Heart left ventricle (tissue), 16 donors: ENCODE measurements at regions of chr22 and their contacts with region 1.

Region 1: GRCh38 chr22:44448271-44448830 is 49.7 kb downstream of the RTL6 start:
- DNase-seq: peak; percentile 59 to 90 (median 78)
- ATAC-seq: peak; percentile 72 to 98 (median 86)
- H3K4me3 ChIP-seq: no peak overlapping the region
- H3K27ac ChIP-seq: no peak overlapping the region
- H3K4me1 ChIP-seq: peaks cover 0 to 20% (median 11%) of the 10 kb centered on the region in 12 donors
- H3K27me3 ChIP-seq: no peaks in the 10 kb centered on the region
- CTCF ChIP-seq: no peak
- POLR2A ChIP-seq: no peak

Region 2: GRCh38 chr22:44369916-44370801 is 78.2 kb before region 1 on chr22:
- intact Hi-C with region 1: loop called in 1 of 10 experiments (anchors 10 kb)
- DNase-seq: peak in 3 of 5 donors; percentile 6 to 51 (median 20)
- ATAC-seq: no peak
- H3K4me3 ChIP-seq: no peak overlapping the region
- H3K27ac ChIP-seq: no peak overlapping the region
- H3K4me1 ChIP-seq: peaks cover 0 to 13% (median under 1%) of the 10 kb centered on the region in 12 donors
- H3K27me3 ChIP-seq: no peaks in the 10 kb centered on the region
- CTCF ChIP-seq: no peak
- POLR2A ChIP-seq: no peak

Region 3: GRCh38 chr22:44410451-44411061 is 37.8 kb before region 1 on chr22:
- intact Hi-C with region 1: loop called in 1 of 10 experiments (anchors 5 kb)
- DNase-seq: peak in 4 of 5 donors; percentile 40 to 75 (median 55)
- ATAC-seq: peak; percentile 76 to 89 (median 86)
- H3K4me3 ChIP-seq: no peak overlapping the region
- H3K27ac ChIP-seq: peak overlapping the region in 4 of 12 donors; percentile 22 to 66 (median 42)
- H3K4me1 ChIP-seq: peaks cover 0 to 34% (median 3%) of the 10 kb centered on the region in 12 donors
- H3K27me3 ChIP-seq: no peaks in the 10 kb centered on the region
- CTCF ChIP-seq: no peak
- POLR2A ChIP-seq: no peak

Region 4: DNA sequence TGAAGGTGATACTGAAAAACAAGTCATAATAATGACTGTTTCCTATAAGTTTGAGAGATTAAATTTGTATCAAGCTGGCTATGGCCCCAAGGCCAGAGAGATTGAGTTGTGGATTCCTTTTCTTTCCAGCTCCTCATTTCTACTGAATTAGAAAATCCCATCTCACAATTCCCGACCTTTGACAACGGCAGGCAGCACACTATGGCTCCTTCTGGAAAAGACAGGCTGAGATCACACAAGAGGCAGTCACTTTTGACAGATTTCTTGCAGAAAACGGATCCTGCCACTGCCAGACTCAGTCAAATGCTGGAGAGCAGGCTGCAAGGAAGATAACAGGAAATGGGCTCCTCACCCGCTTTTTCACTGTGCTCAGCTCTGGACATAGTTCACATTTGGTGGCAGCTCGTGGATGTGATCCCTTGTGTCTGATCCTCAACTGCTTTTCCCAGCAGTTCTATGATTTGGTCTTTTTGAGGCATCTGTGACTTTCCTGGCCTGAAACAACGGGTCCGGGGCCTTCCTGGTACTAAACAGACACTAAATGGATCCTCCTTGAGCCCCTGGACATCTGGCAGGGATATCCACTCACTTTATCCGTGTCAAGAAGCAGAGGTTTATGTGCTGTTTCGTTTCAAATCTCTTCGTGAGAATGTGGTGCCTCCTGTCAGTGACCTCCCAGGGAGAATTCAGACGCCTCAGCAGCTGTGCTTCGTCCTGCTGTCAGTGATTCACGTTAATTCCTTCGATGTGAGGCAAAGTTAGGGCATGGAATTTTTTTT is 75.8 kb after region 1 on chr22:
- intact Hi-C with region 1: no loop called
- DNase-seq: peak in 2 of 5 donors; percentile 62 to 65
- ATAC-seq: peak in 1 of 4 donors; percentile 44
- H3K4me3 ChIP-seq: no peak overlapping the region
- H3K27ac ChIP-seq: peak overlapping the region in 3 of 12 donors; percentile 38 to 49 (median 45)
- H3K4me1 ChIP-seq: peaks cover 0 to 16% (median 9%) of the 10 kb centered on the region in 12 donors
- H3K27me3 ChIP-seq: no peaks in the 10 kb centered on the region
- CTCF ChIP-seq: no peak
- POLR2A ChIP-seq: no peak